ENCODE measurements at regions of chr19 and their contacts with region 1.

Region 1: DNA sequence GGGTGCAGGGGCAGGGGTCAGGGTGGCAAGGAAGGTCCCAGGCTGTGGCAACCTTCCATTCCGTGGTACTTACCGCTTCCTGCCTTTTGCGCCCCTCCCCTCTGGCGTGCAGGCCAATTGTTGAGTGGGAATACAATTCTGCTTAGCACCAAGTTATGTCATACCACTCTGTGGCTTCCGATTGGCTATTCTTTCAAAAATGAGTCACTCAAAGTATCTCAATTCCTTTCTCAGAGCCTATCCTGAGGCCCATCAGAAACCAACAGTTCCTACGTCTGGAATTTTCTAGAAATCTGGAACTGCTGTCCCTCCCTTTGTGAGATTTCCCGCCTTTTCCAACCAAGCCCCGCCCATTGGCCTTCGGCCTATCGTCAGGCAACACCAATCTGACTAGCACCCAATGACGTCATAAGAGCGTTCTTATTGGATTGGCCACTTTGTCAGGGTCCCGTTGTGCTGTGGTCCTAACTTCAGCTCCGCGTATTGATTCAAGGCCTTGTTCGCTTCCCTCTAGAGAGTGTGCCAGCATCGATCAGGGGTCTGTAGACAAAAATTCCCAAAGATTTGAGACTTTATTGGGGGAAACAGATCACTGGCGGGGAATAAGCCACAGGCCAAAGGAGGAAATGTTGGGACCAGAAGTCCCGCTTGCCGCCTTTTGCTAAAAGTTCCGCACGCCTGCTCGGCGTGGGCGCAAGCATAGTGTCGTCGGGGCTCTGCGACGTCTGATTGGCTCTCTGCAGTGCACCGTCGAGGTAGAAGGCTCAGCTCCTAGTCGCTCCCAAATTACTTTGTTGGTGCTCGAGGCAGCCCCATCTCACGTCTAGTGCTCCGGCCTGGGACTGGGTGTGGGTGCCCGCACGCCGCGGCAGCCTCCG is 11.7 kb downstream of the NTN5 start:
- DNase-seq: peak; percentile 52 to 90 (median 73)
- ATAC-seq: peak; percentile 92 to 94 (median 93)
- H3K4me3 ChIP-seq: peak overlapping the region; percentile 22 to 27
- H3K4me3 Mint-ChIP-seq: peak overlapping the region; percentile 63 to 67 (median 66)
- H3K27ac ChIP-seq: peak overlapping the region; percentile 58
- H3K27ac Mint-ChIP-seq: peak overlapping the region; percentile 76 to 86
- H3K4me1 ChIP-seq: peaks cover 4 to 16% of the 10 kb centered on the region in 2 experiments
- H3K4me1 Mint-ChIP-seq: peaks cover 9 to 13% (median 11%) of the 10 kb centered on the region in 3 donors
- H3K27me3 ChIP-seq: no peaks in the 10 kb centered on the region
- H3K27me3 Mint-ChIP-seq: no peaks in the 10 kb centered on the region

Region 2: DNA sequence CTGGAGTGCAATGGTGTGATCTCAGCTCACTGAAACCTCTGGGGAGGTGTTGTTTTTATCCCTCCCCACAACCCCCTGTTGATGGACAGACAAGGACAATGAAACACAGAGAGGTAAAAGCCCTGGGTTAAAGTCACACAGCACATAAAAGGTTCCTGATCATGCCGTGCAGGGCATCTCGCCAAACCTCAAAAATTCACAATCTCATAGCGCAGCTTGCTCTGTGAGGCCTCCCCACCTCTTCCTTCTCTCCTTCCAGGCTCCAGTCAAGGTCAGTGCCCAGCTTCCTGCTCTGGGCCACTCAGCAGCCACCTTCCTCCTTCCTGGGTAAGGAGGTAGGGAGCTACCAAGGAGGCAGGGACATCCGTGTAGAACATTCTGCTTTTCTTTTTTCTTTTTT is 37.0 kb after region 1 on chr19:
- CTCF ChIA-PET with region 1: no interaction called
- POLR2A ChIA-PET with region 1: interaction called in 1 of 2 experiments, 10 read pairs
- DNase-seq: no peak
- ATAC-seq: no peak
- H3K4me3 ChIP-seq: no peak overlapping the region
- H3K4me3 Mint-ChIP-seq: peak overlapping the region in 1 of 3 donors; percentile 26
- H3K27ac ChIP-seq: no peak overlapping the region
- H3K27ac Mint-ChIP-seq: no peak overlapping the region
- H3K4me1 ChIP-seq: peaks cover 0 to 11% of the 10 kb centered on the region in 2 experiments
- H3K4me1 Mint-ChIP-seq: peaks cover 12 to 13% (median 13%) of the 10 kb centered on the region in 3 donors
- H3K27me3 ChIP-seq: peaks cover 0 to 36% of the 10 kb centered on the region in 2 experiments
- H3K27me3 Mint-ChIP-seq: peaks cover 3 to 17% of the 10 kb centered on the region in 2 donors

Measured in T-cell (primary cell).